Activated T-helper 1 cell treated with anti-CD3 and anti-CD28 coated beads, Interleukin-12 subunit alpha, Interleukin-12 subunit beta, Interleukin-2, Interleukin-4 antibody, amounts not matched to agents 30 ng/mL and 10 ng/mL and 1 ng/mL, durations not matched to agents 14 hours and 24 hours and 36 hours (primary cell): ENCODE measurements at regions of chr13 and their contacts with region 1.

Region 1: DNA sequence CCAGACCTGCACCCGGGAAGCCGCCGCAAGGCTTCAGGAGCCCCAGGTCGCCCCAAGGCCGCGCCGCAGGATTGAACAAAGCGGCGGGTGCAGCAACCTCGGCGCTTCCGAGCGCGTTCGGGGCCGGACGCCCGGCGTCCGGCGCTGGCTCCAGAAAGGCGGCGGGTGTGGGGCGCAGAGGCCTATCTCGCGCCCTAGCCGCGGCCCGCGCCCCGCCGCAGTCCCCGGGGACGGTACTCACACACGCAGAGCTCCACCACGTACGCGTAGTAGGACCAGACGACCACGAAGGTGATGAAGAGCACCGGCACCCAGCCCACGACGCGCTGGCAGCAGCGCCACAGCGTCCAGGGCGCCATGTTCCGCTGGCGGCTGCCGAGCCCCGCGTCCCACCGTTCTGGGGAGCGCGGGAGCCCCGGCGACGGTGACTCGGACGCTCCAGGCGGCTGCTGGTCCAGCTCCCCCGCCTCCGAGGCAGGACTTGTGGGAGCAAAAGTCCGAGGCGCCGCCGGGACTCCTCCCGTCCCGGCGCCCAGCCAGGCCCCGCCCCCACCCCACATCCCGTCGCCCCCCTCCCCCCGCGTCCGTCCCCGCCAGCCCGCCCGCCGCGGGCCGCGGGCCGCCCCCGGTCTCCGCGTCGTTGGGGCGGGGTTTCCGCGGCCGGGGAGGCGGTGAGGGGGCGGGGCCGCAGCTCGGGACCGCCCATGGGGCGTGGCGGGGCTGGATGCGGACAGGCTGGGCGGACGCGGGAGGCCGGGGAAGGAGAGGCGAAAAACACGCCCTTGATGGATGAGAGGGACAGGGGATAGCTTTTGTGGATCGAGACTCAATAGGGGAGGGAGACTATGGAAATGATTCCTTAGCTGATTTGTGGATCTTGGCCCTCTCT is at the start of gene ZDHHC20:
- DNase-seq: peak; percentile 86
- H3K4me3 Mint-ChIP-seq: peak within 1 kb of the TSS; percentile 94
- H3K27ac Mint-ChIP-seq: peak within 1 kb of the TSS; percentile 94
- H3K4me1 Mint-ChIP-seq: peaks cover 32% of the 10 kb centered on the region
- H3K27me3 Mint-ChIP-seq: no peaks in the 10 kb centered on the region
- total RNA-seq, gene ZDHHC20: 61.2 and 66.4 TPM in 2 replicates

Region 2: DNA sequence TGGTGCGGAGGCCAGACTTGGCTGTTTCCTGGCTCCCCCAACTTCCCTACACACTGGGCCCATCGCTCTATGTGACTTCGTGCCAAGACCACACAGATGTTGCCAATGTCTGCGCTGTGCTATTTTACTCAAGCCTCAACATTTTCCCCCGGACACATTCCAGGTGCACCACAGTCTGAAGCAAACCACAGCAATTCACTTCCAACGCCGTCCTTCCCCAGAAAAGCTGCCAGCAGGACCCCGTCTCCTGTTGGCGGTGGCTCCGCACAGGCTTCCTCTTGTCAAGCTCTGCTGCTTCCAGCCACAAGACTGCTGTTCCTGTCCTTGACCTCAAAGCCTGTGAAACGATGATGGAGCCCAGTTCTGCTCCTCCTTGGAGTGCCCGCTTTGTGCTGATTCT is 1034.1 kb before region 1 on chr13:
- intact Hi-C with region 1: loop called (anchors 5 kb)
- DNase-seq: no peak
- H3K4me3 Mint-ChIP-seq: no peak overlapping the region
- H3K27ac Mint-ChIP-seq: no peak overlapping the region
- H3K4me1 Mint-ChIP-seq: peaks cover 65% of the 10 kb centered on the region
- H3K27me3 Mint-ChIP-seq: peaks cover 2% of the 10 kb centered on the region

Region 3: GRCh38 chr13:21176220-21176982 is 282.7 kb before region 1 on chr13 and contains the starts of genes MRPL57 and SKA3:
- intact Hi-C with region 1: loop called (anchors 1 kb)
- DNase-seq: peak; percentile 95
- H3K4me3 Mint-ChIP-seq: peak within 1 kb of the TSS; percentile 98
- H3K27ac Mint-ChIP-seq: peak within 1 kb of the TSS; percentile 96
- H3K4me1 Mint-ChIP-seq: peaks cover 34% of the 10 kb centered on the region
- H3K27me3 Mint-ChIP-seq: no peaks in the 10 kb centered on the region
- total RNA-seq, gene MRPL57: 31.4 and 33.3 TPM in 2 replicates
- total RNA-seq, gene SKA3: 29.4 and 32.4 TPM in 2 replicates

Region 4: GRCh38 chr13:21402586-21403228 is 56.4 kb before region 1 on chr13:
- intact Hi-C with region 1: loop called (anchors 5 kb)
- DNase-seq: no peak
- H3K4me3 Mint-ChIP-seq: no peak overlapping the region
- H3K27ac Mint-ChIP-seq: no peak overlapping the region
- H3K4me1 Mint-ChIP-seq: peaks cover 30% of the 10 kb centered on the region
- H3K27me3 Mint-ChIP-seq: no peaks in the 10 kb centered on the region

Region 5: GRCh38 chr13:21435710-21436151 is 23.3 kb before region 1 on chr13:
- intact Hi-C with region 1: loop called (anchors 1 kb)
- DNase-seq: peak; percentile 48
- H3K4me3 Mint-ChIP-seq: peak overlapping the region; percentile 58
- H3K27ac Mint-ChIP-seq: peak overlapping the region; percentile 84
- H3K4me1 Mint-ChIP-seq: peaks cover 43% of the 10 kb centered on the region
- H3K27me3 Mint-ChIP-seq: no peaks in the 10 kb centered on the region

Region 6: GRCh38 chr13:21603531-21604448 is 144.7 kb after region 1 on chr13 and contains the start of gene MICU2:
- intact Hi-C with region 1: loop called (anchors 2 kb)
- DNase-seq: peak; percentile 94
- H3K4me3 Mint-ChIP-seq: peak within 1 kb of the TSS; percentile 85
- H3K27ac Mint-ChIP-seq: peak within 1 kb of the TSS; percentile 88
- H3K4me1 Mint-ChIP-seq: peaks cover 24% of the 10 kb centered on the region
- H3K27me3 Mint-ChIP-seq: peaks cover 24% of the 10 kb centered on the region
- total RNA-seq, gene MICU2: 32.5 and 33.8 TPM in 2 replicates